CD4-positive, alpha-beta T cell (primary cell): ENCODE measurements at regions of chr12 and their contacts with region 1.

Region 1: DNA sequence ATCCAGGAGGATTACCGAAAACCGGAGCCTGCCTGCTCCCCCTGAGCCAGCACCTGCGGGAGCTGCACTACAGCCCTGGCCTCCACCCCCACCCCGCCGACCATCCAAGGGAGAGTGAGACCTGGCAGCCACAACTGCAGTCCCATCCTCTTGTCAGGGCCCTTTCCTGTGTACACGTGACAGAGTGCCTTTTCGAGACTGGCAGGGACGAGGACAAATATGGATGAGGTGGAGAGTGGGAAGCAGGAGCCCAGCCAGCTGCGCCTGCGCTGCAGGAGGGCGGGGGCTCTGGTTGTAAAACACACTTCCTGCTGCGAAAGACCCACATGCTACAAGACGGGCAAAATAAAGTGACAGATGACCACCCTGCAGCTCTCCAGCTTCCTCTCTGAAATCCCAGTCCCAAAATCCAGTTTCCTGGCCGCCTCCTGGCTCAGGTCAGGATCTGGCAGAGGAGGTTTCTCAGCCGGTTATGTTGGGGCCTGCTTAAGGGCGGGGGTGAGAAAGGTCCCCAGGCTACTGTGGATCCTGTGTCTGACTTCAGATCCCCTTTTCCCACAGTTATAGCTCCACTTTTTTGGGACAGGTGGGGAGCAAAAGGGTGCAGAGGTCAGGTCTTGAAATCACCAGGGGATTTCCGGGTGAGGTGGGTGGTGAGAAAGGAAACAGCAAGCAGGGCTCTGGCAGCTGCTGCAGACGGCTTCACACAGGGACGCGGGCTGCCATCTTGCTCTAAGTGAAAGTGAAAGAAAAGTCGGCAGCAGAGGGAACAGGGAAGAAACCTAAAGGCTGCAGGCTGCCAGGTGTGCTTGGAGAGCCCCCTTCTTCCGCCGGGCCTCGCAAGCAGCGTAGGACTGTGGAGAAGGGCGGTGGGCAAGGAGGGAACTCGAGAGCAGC is at the start of gene TAPBPL:
- DNase-seq: peak; percentile 61 to 95 (median 74)
- ATAC-seq: peak; percentile 92
- H3K4me3 ChIP-seq: peak within 1 kb of the TSS; percentile 97
- H3K4me3 Mint-ChIP-seq: peak within 1 kb of the TSS; percentile 94
- H3K27ac ChIP-seq: peak within 1 kb of the TSS; percentile 96 to 99
- H3K27ac Mint-ChIP-seq: peak within 1 kb of the TSS; percentile 98
- H3K4me1 ChIP-seq: peaks cover 71% of the 10 kb centered on the region
- H3K4me1 Mint-ChIP-seq: peaks cover 77% of the 10 kb centered on the region
- H3K27me3 ChIP-seq: no peaks in the 10 kb centered on the region
- H3K27me3 Mint-ChIP-seq: no peaks in the 10 kb centered on the region
- CTCF ChIP-seq: no peak
- total RNA-seq, gene TAPBPL: 14.7 to 15.8 TPM

Region 2: DNA sequence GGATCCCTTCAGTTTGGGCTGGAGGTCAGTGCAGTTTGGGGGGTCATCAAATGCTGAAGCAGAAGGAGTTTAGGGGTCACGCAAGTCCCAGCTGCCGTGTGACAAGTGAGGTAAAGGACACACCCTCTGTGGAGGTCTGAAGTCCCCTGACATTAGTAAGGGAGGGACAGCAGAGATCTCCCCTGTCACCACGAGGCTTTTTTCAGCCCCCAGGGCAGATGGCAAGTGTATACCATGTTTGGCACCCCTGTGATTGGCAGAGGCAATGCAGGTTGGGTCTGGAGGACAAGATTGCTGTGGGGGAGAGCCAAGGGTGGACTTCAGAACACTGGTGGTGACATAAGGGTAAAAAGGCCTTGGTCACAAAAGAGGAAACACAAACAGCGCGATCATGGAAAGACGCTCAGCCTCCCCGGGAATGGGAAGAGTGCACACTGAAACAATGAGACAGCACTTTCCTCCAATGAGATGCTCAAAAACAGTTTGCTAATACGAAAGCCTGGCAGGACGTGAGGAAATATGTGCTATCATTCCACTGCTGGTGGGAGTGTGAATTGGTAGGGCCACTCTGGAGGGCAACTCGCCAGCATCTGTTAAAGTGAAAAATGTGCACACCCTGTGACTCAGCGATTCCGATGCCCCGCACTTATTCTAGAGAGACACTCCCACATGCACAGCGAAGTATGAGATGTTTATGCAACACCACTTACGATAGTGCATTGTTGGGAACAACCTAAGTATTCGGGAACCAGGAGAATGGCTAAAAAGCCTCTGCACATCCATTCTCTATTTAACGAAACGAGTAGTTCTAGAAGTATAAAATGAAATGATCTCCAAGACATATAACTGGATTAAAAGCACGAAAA is 21.2 kb before region 1 on chr12:
- CTCF ChIA-PET with region 1: interaction called, 5 read pairs
- POLR2A ChIA-PET with region 1: interaction called, 31 read pairs
- intact Hi-C with region 1: loop called in 1 of 2 experiments (anchors 2 kb)
- DNase-seq: peak in 3 of 14 experiments; percentile 34 to 48 (median 43)
- ATAC-seq: no peak
- H3K4me3 ChIP-seq: peak overlapping the region; percentile 3
- H3K4me3 Mint-ChIP-seq: no peak overlapping the region
- H3K27ac ChIP-seq: no peak overlapping the region
- H3K27ac Mint-ChIP-seq: peak overlapping the region; percentile 56
- H3K4me1 ChIP-seq: peaks cover 62% of the 10 kb centered on the region
- H3K4me1 Mint-ChIP-seq: peaks cover 70% of the 10 kb centered on the region
- H3K27me3 ChIP-seq: no peaks in the 10 kb centered on the region
- H3K27me3 Mint-ChIP-seq: no peaks in the 10 kb centered on the region
- CTCF ChIP-seq: no peak

Region 3: GRCh38 chr12:6493497-6494257 is 42.1 kb after region 1 on chr12 and contains the start of gene NCAPD2:
- CTCF ChIA-PET with region 1: no interaction called
- POLR2A ChIA-PET with region 1: interaction called, 12 read pairs
- intact Hi-C with region 1: no loop called
- DNase-seq: peak; percentile 87 to 98 (median 92)
- ATAC-seq: peak; percentile 84
- H3K4me3 ChIP-seq: peak within 1 kb of the TSS; percentile 96
- H3K4me3 Mint-ChIP-seq: peak within 1 kb of the TSS; percentile 93
- H3K27ac ChIP-seq: peak within 1 kb of the TSS; percentile 89 to 94
- H3K27ac Mint-ChIP-seq: peak within 1 kb of the TSS; percentile 91
- H3K4me1 ChIP-seq: peaks cover 34% of the 10 kb centered on the region
- H3K4me1 Mint-ChIP-seq: peaks cover 48% of the 10 kb centered on the region
- H3K27me3 ChIP-seq: no peaks in the 10 kb centered on the region
- H3K27me3 Mint-ChIP-seq: no peaks in the 10 kb centered on the region
- CTCF ChIP-seq: no peak
- total RNA-seq, gene NCAPD2: 13.7 to 14.9 TPM

Region 4: DNA sequence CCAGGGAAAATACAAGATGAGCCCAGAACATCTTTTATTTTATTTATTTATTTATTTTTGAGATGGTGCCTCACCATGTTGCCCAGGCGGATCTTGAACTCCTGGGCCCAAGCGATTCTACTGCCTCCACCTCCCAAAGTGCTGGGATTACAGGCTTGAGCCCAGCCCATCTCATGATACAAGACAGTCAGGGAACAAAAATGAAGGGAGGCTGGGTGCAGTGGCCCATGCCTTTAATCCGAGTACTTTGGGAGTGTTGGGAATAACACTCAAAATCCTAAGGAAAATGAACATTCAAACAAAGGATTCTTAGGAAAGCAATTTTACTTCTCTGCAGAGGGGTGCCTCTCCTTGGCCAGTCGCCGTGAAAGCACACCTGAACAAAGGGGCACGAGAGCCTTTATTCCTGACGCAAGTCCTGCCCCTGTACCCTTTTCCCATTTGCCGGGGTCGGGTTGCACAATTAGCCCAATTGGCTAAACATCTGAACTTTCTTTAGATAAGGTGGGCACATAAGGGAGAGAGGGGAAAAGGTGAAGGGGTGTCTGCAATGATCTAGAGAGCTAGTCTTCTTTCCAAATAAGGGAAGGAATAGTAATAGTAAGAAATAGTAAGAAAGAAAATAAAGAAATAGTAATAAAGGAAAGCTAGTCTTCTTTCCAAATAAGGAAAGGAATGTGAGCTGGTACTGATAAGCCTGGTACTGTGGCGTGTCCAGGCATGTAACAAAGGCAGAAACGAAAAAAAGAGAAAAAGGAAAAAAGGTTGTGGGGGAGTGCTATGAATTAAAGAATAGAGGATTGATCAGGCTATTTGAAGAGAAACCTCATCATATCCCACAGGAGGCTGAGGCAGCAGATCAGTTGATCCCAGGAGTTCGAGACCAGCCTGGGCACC is 55.8 kb after region 1 on chr12:
- CTCF ChIA-PET with region 1: no interaction called
- POLR2A ChIA-PET with region 1: no interaction called
- intact Hi-C with region 1: no loop called
- DNase-seq: no peak
- ATAC-seq: no peak
- H3K4me3 ChIP-seq: no peak overlapping the region
- H3K4me3 Mint-ChIP-seq: no peak overlapping the region
- H3K27ac ChIP-seq: no peak overlapping the region
- H3K27ac Mint-ChIP-seq: no peak overlapping the region
- H3K4me1 ChIP-seq: no peaks in the 10 kb centered on the region
- H3K4me1 Mint-ChIP-seq: no peaks in the 10 kb centered on the region
- H3K27me3 ChIP-seq: no peaks in the 10 kb centered on the region
- H3K27me3 Mint-ChIP-seq: no peaks in the 10 kb centered on the region
- CTCF ChIP-seq: no peak

Region 5: GRCh38 chr12:6540181-6540877 is 88.7 kb after region 1 on chr12:
- CTCF ChIA-PET with region 1: interaction called, 11 read pairs
- POLR2A ChIA-PET with region 1: interaction called, 42 read pairs
- intact Hi-C with region 1: no loop called
- DNase-seq: peak in 10 of 14 experiments; percentile 33 to 67 (median 54)
- ATAC-seq: peak; percentile 37
- H3K4me3 ChIP-seq: peak overlapping the region; percentile 26
- H3K4me3 Mint-ChIP-seq: peak overlapping the region; percentile 84
- H3K27ac ChIP-seq: no peak overlapping the region
- H3K27ac Mint-ChIP-seq: peak overlapping the region; percentile 90
- H3K4me1 ChIP-seq: peaks cover 72% of the 10 kb centered on the region
- H3K4me1 Mint-ChIP-seq: peaks cover 59% of the 10 kb centered on the region
- H3K27me3 ChIP-seq: no peaks in the 10 kb centered on the region
- H3K27me3 Mint-ChIP-seq: no peaks in the 10 kb centered on the region
- CTCF ChIP-seq: no peak